Breast epithelium (tissue), 4 donors: ENCODE measurements at regions of chr1 and their contacts with region 1.

Region 1: GRCh38 chr1:204363335-204364124 is 3.8 kb upstream of the PLEKHA6 start:
- DNase-seq: peak; percentile 54 to 68
- H3K4me3 ChIP-seq: peak overlapping the region; percentile 42 to 61 (median 48)
- H3K27ac ChIP-seq: peak overlapping the region; percentile 52 to 63
- H3K4me1 ChIP-seq: peaks cover 0 to 6% of the 10 kb centered on the region in 2 donors
- H3K27me3 ChIP-seq: no peaks in the 10 kb centered on the region
- CTCF ChIP-seq: peak; percentile 98 to 99 (median 99)
- POLR2A ChIP-seq: no peak

Region 2: DNA sequence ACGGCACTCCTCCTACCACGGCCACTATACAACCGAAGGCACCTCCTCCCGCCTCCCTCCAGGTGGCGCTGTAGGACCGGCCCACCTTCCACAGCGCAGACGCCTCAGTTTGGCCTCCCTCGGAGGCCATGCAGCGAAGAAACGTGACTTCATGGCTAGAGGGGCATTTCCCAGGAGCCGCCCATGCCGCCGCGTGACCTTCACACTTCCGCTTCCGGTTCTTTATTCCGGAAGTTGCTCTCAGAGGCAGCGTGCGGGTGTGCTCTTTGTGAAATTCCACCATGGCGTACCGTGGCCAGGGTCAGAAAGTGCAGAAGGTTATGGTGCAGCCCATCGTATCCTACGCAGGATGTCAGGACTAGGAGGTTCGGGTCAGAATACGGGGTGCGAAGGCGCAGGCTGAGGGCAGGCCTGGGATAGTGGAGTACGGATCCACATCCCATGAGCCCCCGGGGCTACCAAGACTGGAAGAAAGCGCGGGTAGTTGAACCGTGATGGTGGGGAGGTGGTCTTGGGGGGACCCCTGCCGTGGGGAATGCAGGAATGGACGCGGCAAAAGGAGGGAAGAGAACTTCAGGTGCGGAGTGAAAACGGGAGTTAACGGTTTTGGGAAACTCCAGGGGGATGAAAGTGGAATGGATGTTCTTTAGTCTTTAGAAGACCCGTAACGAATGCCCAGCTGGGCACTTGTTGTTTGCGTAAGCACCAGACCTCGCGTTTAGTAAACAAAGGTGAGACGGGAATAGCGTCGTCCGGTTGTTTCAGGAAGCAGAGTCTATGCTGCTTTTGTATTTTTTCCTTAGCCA is 501.9 kb before region 1 on chr1 and contains the start of gene SNRPE:
- intact Hi-C with region 1: loop called (anchors 10 kb)
- DNase-seq: peak; percentile 96
- H3K4me3 ChIP-seq: peak within 1 kb of the TSS; percentile 92 to 98 (median 97)
- H3K27ac ChIP-seq: peak within 1 kb of the TSS; percentile 82 to 87
- H3K4me1 ChIP-seq: no peaks in the 10 kb centered on the region
- H3K27me3 ChIP-seq: no peaks in the 10 kb centered on the region
- CTCF ChIP-seq: peak; percentile 94 to 98 (median 96)
- POLR2A ChIP-seq: peak; percentile 77
- total RNA-seq, gene SNRPE: 51.8 to 74.9 (median 73.4) TPM

Region 3: DNA sequence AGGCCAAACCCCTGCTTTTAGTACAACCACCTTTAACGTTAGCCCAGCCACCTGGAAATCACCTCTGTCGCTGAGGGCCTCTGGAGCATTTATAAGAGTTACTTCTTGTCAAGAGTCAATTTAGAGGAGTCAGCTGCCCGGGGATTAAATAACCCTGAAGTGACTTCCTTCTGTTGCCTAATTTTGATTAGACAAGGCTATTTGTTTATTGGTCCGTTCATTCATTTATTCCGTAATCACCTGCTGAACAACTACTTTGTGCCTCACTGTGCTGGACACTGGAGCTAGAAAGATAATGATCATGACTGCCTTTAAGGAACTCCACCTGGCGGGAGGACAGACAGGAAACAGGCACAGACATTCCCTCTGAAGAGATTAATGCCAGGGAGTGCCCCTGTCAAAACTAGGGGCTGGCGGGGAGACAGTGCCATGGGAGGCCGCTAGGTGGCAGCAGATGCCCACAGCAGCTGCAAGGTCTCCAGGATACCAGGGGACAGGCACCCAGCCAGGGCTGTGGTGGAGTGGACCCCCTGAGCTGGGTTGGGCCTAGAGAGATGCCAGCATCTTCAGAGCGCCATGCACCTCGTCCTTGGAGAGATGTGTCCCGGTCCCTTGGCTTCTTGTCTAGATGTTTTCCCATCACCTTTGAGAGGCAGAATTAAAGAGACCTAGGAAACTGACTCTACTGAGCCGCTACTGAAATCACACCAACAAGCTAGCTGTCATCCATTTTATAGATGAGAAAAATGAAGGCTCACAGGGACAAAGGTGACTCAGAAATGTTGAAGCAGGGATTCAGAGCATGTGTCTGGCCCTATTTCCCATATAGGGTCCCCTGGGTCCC is 201.1 kb before region 1 on chr1:
- intact Hi-C with region 1: loop called (anchors 10 kb)
- DNase-seq: peak; percentile 80 to 90
- H3K4me3 ChIP-seq: no peak overlapping the region
- H3K27ac ChIP-seq: no peak overlapping the region
- H3K4me1 ChIP-seq: no peaks in the 10 kb centered on the region
- H3K27me3 ChIP-seq: no peaks in the 10 kb centered on the region
- CTCF ChIP-seq: peak; percentile 97 to 99 (median 98)
- POLR2A ChIP-seq: no peak